B cell (primary cell): ENCODE measurements at regions of chr1 and their contacts with region 1.

Region 1: DNA sequence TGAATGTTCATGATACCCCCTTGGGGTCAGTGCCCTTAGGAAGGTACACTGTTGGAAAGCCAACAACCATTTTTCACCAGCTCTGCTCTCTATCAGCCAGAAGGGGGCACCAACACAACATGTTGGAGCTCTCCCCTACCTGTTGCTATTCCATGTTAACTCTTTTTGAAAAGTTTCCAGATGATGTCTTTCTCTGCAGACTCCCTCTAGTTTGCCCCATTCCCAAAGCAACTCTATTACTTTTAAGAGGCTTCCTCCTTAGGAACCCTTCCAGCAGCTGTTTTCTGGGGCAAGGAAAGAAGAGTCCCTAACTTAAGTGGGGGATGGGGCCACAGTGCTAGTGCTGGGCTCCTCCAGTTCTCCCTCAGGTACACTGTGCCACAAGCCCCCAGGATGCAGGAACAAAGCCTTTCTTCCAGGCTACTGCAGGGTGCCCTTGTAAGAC is 22.9 kb upstream of the NDC1 start:
- DNase-seq: peak; percentile 70
- ATAC-seq: peak; percentile 62
- H3K4me3 ChIP-seq: no peak overlapping the region
- H3K4me3 Mint-ChIP-seq: no peak overlapping the region
- H3K27ac ChIP-seq: no peak overlapping the region
- H3K27ac Mint-ChIP-seq: no peak overlapping the region
- H3K4me1 ChIP-seq: peaks cover 10 to 15% of the 10 kb centered on the region in 2 donors
- H3K4me1 Mint-ChIP-seq: peaks cover 23% of the 10 kb centered on the region
- H3K27me3 ChIP-seq: no peaks in the 10 kb centered on the region
- H3K27me3 Mint-ChIP-seq: no peaks in the 10 kb centered on the region
- CTCF ChIP-seq: peak; percentile 90

Region 2: GRCh38 chr1:53878492-53879105 is 17.6 kb after region 1 on chr1:
- CTCF ChIA-PET with region 1: interaction called, 32 read pairs
- POLR2A ChIA-PET with region 1: no interaction called
- intact Hi-C with region 1: no loop called
- DNase-seq: peak; percentile 44
- ATAC-seq: no peak
- H3K4me3 ChIP-seq: no peak overlapping the region
- H3K4me3 Mint-ChIP-seq: no peak overlapping the region
- H3K27ac ChIP-seq: no peak overlapping the region
- H3K27ac Mint-ChIP-seq: no peak overlapping the region
- H3K4me1 ChIP-seq: no peaks in the 10 kb centered on the region
- H3K4me1 Mint-ChIP-seq: no peaks in the 10 kb centered on the region
- H3K27me3 ChIP-seq: no peaks in the 10 kb centered on the region
- H3K27me3 Mint-ChIP-seq: no peaks in the 10 kb centered on the region
- CTCF ChIP-seq: peak; percentile 63

Region 3: GRCh38 chr1:54081306-54082270 is 220.6 kb after region 1 on chr1:
- CTCF ChIA-PET with region 1: interaction called, 19 read pairs
- POLR2A ChIA-PET with region 1: no interaction called
- intact Hi-C with region 1: no loop called
- DNase-seq: peak; percentile 61
- ATAC-seq: peak; percentile 69
- H3K4me3 ChIP-seq: no peak overlapping the region
- H3K4me3 Mint-ChIP-seq: no peak overlapping the region
- H3K27ac ChIP-seq: no peak overlapping the region
- H3K27ac Mint-ChIP-seq: no peak overlapping the region
- H3K4me1 ChIP-seq: no peaks in the 10 kb centered on the region
- H3K4me1 Mint-ChIP-seq: peaks cover 4% of the 10 kb centered on the region
- H3K27me3 ChIP-seq: no peaks in the 10 kb centered on the region
- H3K27me3 Mint-ChIP-seq: no peaks in the 10 kb centered on the region
- CTCF ChIP-seq: peak; percentile 74